Activated CD4-positive, alpha-beta memory T cell treated with anti-CD3 and anti-CD28 coated beads for 36 hours (primary cell): ENCODE measurements at regions of chr7 and their contacts with region 1.

Region 1: GRCh38 chr7:135620980-135621850 is 41.1 kb upstream of the STMP1 start:
- DNase-seq: no peak
- H3K4me3 Mint-ChIP-seq: no peak overlapping the region
- H3K27ac Mint-ChIP-seq: no peak overlapping the region
- H3K4me1 Mint-ChIP-seq: peaks cover 3% of the 10 kb centered on the region
- H3K27me3 Mint-ChIP-seq: no peaks in the 10 kb centered on the region

Region 2: GRCh38 chr7:134394046-134394445 is 1227.2 kb before region 1 on chr7:
- CTCF ChIA-PET with region 1: no interaction called
- POLR2A ChIA-PET with region 1: no interaction called
- intact Hi-C with region 1: no loop called
- DNase-seq: no peak
- H3K4me3 Mint-ChIP-seq: no peak overlapping the region
- H3K27ac Mint-ChIP-seq: no peak overlapping the region
- H3K4me1 Mint-ChIP-seq: no peaks in the 10 kb centered on the region
- H3K27me3 Mint-ChIP-seq: peaks cover 6% of the 10 kb centered on the region

Region 3: DNA sequence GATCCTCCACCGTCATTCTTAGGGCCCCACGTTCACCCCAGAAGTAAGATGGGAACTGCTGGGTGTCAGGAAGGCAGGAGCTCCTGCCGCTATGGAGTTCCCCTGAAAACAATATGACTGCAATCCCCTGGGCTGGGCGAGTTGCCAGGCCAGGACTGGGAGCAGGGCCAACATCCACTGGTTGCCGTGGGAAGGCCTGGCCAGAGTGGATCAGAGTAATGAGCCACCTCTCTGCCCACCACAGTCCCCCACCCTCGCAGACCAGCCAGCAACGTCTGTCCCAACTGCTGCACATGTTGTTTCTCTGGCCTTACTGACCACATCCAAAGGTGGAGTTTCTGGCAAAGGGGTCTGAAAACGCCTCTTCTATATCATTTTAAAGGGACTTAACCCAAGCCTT is 300.9 kb before region 1 on chr7:
- CTCF ChIA-PET with region 1: no interaction called
- POLR2A ChIA-PET with region 1: no interaction called
- intact Hi-C with region 1: no loop called
- DNase-seq: no peak
- H3K4me3 Mint-ChIP-seq: no peak overlapping the region
- H3K27ac Mint-ChIP-seq: no peak overlapping the region
- H3K4me1 Mint-ChIP-seq: no peaks in the 10 kb centered on the region
- H3K27me3 Mint-ChIP-seq: no peaks in the 10 kb centered on the region

Region 4: DNA sequence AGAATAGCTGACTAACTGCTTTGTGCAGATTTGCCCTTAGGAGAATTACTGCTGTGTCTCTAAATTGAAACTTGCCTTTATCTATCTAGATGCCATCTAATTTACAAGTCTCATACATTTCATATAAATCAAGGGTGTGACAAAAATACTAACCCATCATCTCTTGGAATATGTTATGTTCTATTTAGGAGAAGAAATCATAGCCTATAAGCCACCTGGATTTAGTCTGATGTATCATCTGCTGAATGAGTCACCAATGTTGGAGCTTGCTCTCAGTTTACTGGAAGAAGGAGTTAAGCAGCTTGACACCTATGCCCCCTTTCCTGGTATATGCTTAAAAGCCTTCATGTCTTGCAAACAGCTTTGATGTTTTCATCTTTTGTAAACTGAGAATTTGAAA is 20.0 kb before region 1 on chr7:
- CTCF ChIA-PET with region 1: interaction called, 14 read pairs
- POLR2A ChIA-PET with region 1: no interaction called
- intact Hi-C with region 1: no loop called
- DNase-seq: no peak
- H3K4me3 Mint-ChIP-seq: no peak overlapping the region
- H3K27ac Mint-ChIP-seq: peak overlapping the region; percentile 10
- H3K4me1 Mint-ChIP-seq: peaks cover 1% of the 10 kb centered on the region
- H3K27me3 Mint-ChIP-seq: no peaks in the 10 kb centered on the region

Region 5: DNA sequence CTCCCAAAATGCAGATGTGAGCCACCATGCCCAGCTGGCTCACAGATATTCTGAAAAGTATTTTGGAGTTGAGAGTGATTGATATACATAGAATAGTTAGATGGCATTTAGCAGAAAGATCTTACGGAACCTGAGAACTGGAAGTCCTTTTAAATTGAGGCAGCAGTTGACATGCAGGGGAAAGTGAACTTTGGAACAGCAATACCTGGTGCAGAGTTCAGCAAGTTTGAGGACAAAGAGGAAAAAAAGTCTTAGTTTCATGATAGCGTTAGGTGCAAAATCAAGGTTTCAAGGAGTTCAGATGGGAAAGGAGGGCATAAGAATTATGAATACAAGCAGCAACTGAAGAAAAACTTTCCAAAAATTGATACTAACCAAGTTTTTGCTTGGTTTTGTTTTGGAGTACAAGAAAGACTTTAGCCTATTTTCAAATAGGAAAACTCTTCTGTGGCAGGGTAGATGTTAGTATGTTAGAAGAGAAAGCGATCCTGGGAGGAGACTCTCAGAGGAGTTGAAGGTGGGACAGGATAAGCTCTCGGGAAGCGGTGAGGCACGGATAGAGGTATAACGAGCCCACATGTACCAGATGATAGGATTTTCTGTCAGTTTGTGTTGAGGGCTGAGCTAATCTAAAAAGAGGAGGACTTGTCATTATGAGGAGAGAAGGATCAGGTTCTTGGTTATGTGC is 13.1 kb after region 1 on chr7:
- CTCF ChIA-PET with region 1: interaction called, 18 read pairs
- POLR2A ChIA-PET with region 1: no interaction called
- intact Hi-C with region 1: no loop called
- DNase-seq: no peak
- H3K4me3 Mint-ChIP-seq: no peak overlapping the region
- H3K27ac Mint-ChIP-seq: no peak overlapping the region
- H3K4me1 Mint-ChIP-seq: no peaks in the 10 kb centered on the region
- H3K27me3 Mint-ChIP-seq: no peaks in the 10 kb centered on the region

Region 6: DNA sequence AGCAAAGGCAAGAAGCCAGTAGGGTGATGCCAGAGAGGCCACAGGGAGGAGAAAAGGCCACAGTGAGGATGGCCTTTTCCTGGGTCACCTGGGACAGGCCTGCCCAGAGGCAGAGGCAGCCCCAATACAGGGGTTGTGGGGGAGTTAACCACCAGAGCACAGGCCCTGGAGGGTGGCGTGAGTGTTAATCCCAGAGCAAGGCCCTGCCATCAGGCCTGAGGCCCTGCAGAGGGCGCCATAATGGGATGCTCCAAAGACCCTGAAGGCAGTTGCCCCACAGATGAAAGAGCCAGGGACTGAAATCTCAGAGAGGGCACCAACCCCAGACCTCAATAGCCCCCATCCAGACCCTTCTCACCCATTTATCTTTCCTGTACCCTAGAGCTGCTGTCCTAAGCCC is 82.9 kb after region 1 on chr7:
- CTCF ChIA-PET with region 1: no interaction called
- POLR2A ChIA-PET with region 1: no interaction called
- intact Hi-C with region 1: no loop called
- DNase-seq: no peak
- H3K4me3 Mint-ChIP-seq: no peak overlapping the region
- H3K27ac Mint-ChIP-seq: no peak overlapping the region
- H3K4me1 Mint-ChIP-seq: no peaks in the 10 kb centered on the region
- H3K27me3 Mint-ChIP-seq: no peaks in the 10 kb centered on the region